ENCODE measurements at regions of chr1 and their contacts with region 1.

Region 1: DNA sequence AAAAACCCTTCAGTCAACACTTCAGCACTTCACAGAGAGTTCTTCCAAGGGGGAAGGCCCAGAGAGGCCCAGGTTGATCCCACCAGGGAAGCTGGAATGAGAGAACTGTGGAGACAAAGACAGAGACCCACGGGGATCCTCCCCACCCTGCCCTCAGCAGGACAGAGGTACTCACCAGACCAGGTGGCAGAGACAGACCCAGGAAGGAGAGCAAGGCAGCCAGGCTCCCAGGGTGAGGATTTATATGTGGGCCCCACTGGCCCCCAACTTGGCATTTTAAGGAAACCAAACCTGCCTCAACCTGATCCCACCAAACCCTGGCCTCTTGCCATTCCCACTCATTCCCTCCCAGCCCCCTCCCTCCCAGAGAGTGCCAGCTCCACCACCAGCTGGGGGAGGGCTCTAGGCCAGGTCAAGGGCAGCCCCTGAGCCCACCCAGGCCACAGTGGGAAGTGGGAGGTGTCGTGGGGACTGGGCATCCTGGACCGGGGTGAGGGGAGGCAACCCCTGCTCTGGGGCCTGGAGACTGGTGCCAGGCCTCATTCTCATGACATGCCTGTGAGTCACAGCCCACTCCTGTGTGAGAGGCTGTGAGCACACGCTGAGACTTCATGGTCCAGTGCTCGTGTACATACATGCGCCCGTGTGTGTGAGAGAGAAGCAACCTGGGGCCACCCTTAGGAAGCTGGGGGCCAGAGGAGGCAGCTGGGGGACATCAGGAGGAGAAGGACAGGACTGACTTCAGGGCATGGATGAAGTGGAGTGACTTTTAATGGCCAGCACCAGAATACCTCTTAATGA is at the start of gene S100A2:
- DNase-seq: peak in 1 of 2 donors; percentile 49
- H3K4me3 ChIP-seq: peak within 1 kb of the TSS in 1 of 3 donors; percentile 13
- H3K27ac ChIP-seq: peak within 1 kb of the TSS; percentile 99
- H3K4me1 ChIP-seq: peaks cover 11 to 25% of the 10 kb centered on the region in 2 donors
- H3K27me3 ChIP-seq: no peaks in the 10 kb centered on the region
- CTCF ChIP-seq: no peak
- POLR2A ChIP-seq: no peak
- total RNA-seq, gene S100A2: 0.33 to 5.4 TPM in 2 of 3 donors, not detected in the other

Region 2: DNA sequence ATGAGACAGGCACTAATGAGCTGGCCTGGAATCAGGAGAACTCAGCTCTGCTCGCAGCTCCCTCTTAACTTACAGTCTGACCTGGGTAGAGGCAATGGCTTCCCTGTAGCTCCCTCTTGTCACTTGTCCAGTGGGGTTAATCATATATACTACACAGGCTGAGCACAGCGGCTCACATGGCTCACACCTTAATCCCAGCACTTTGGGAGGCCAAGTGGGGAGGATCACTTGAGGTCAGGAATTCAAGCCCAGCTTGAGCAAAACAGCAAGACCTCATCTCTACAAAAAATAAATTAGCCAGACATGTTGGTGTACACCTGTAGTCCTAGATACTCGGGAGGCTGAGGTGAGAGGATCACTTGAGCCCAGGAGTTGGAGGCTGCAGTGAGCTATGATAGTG is 33.9 kb before region 1 on chr1:
- intact Hi-C with region 1: loop called (anchors 2 kb)
- DNase-seq: no peak
- H3K4me3 ChIP-seq: no peak overlapping the region
- H3K27ac ChIP-seq: peak overlapping the region; percentile 40 to 99
- H3K4me1 ChIP-seq: peaks cover 0 to 2% of the 10 kb centered on the region in 2 donors
- H3K27me3 ChIP-seq: no peaks in the 10 kb centered on the region
- CTCF ChIP-seq: no peak
- POLR2A ChIP-seq: no peak